ENCODE measurements at regions of chr11 and their contacts with region 1.

Region 1: GRCh38 chr11:119381181-119381988 is at the start of gene USP2:
- DNase-seq: peak; percentile 88 to 97
- H3K4me3 ChIP-seq: peak within 1 kb of the TSS; percentile 42
- H3K4me1 ChIP-seq: peaks cover 15% of the 10 kb centered on the region
- H3K27me3 ChIP-seq: no peaks in the 10 kb centered on the region

Region 2: DNA sequence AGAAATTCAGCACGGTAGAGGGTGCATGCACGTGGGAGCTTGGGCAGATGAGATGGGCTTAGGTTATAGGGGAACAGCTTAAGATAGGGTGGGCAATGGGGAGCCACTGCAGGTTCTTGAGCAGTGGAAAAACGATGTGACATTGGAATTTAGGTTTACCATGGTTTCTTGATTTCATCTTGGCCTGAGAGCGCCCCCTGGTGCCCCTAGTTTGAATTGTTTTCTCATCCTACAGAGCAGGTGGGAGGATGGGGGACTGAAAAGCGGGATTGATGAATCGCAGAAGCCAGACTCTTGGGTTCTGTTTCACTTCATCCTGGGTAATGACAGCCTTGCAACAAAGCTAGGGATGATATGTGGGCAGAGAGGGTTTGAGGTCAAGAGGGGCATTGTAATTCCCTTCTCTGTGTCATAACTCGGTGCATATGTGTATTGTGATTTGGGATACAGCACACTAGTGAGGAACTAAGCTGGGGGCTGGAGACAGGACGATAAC is 57.8 kb before region 1 on chr11:
- in situ Hi-C with region 1: loop called (anchors 10 kb)
- DNase-seq: peak; percentile 56 to 93
- H3K4me3 ChIP-seq: no peak overlapping the region
- H3K4me1 ChIP-seq: peaks cover 30% of the 10 kb centered on the region
- H3K27me3 ChIP-seq: no peaks in the 10 kb centered on the region